ENCODE measurements at regions of chr17 and their contacts with region 1.

Region 1: GRCh38 chr17:58308173-58308984 is 20.2 kb downstream of the TSPOAP1 start:
- DNase-seq: no peak
- H3K4me3 ChIP-seq: no peak overlapping the region
- H3K27ac ChIP-seq: no peak overlapping the region
- H3K4me1 ChIP-seq: no peaks in the 10 kb centered on the region
- H3K27me3 ChIP-seq: no peaks in the 10 kb centered on the region
- CTCF ChIP-seq: no peak
- POLR2A ChIP-seq: no peak

Region 2: DNA sequence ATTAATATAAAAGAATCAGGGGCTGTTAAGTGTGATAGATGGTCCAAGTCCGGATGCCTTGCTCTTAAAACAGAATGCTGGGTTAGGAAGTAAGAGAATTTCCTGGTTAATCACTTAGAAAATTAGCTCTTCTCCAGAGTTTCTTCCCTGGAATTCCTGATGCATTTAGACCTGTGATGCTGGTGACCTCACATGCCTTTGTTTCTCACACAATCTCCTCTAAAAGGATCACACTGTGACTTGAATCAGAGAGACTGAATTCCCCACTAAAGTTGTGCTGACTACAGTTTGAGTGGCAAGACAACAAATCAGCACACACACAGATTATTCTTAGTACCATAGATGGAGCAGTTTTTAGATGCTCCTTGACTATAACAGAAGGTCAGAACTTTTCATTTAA is 113.3 kb after region 1 on chr17:
- intact Hi-C with region 1: no loop called
- DNase-seq: no peak
- H3K4me3 ChIP-seq: no peak overlapping the region
- H3K27ac ChIP-seq: no peak overlapping the region
- H3K4me1 ChIP-seq: no peaks in the 10 kb centered on the region
- H3K27me3 ChIP-seq: no peaks in the 10 kb centered on the region
- CTCF ChIP-seq: no peak
- POLR2A ChIP-seq: no peak

Region 3: DNA sequence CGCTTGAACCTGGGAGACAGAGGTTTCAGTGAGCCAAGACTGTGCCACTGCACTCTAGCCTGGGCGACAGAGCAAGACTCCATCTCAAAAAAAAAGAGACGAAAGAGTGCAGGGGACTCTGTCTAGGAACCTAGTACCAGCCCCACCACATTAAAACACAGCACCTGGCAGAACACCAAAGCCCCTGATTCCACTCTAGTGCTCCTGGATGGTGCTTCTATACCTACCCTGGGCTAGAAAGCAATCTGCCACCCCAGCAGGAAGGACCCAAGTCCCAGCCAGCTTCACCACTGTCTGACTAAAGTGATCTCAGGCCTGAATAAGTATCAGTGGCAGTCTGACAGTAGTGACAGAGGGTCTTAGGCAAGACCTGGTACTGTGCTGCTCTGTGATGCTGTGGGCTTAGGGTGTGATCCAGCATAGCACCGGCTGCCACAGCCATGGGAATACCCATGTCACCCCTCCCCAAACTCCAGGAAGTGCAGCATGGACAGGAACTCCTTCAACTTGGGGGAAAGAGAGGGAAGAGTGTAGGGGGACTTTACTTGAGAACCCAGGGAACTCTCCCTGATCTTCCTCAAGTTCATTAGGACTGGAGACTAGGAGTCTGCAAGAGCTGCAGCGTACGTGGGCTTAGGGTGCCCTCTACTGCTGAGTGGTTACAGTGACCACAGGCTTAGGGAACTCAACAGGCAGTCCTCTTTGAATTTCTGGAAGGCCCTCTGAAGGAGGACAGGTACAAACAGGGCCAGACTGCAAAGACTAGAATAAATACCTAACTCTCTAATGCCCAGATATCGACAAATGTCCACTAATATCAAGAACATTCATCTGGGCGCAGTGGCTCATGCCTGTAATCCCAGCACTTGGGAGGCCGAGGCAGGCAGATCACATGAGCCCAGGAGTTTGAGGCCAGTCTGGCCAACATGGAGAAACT is 138.9 kb after region 1 on chr17:
- intact Hi-C with region 1: loop called (anchors 5 kb)
- DNase-seq: peak; percentile 63 to 73
- H3K4me3 ChIP-seq: no peak overlapping the region
- H3K27ac ChIP-seq: no peak overlapping the region
- H3K4me1 ChIP-seq: no peaks in the 10 kb centered on the region
- H3K27me3 ChIP-seq: no peaks in the 10 kb centered on the region
- CTCF ChIP-seq: peak in 4 of 6 experiments; percentile 49 to 70 (median 61)
- POLR2A ChIP-seq: no peak